IMR-90 (cell line): ENCODE measurements at regions of chr10 and their contacts with region 1.

Region 1: GRCh38 chr10:18312374-18313139 is 172.3 kb downstream of the CACNB2 start:
- DNase-seq: peak; percentile 62
- ATAC-seq: peak; percentile 90
- H3K4me3 ChIP-seq: no peak overlapping the region
- H3K27ac ChIP-seq: no peak overlapping the region
- H3K4me1 ChIP-seq: no peaks in the 10 kb centered on the region
- H3K27me3 ChIP-seq: no peaks in the 10 kb centered on the region; the same call in 1 of the 2 replicates
- CTCF ChIP-seq: peak; percentile 51
- POLR2A ChIP-seq: no peak
- RAD21 ChIP-seq: peak; percentile 60

Region 2: GRCh38 chr10:18238870-18239485 is 73.6 kb before region 1 on chr10:
- CTCF ChIA-PET with region 1: no interaction called
- POLR2A ChIA-PET with region 1: no interaction called
- dilution Hi-C with region 1: no loop called
- in situ Hi-C with region 1: no loop called
- intact Hi-C with region 1: loop called (anchors 2 kb)
- DNase-seq: peak; percentile 70
- ATAC-seq: peak; percentile 84
- H3K4me3 ChIP-seq: no peak overlapping the region
- H3K27ac ChIP-seq: no peak overlapping the region
- H3K4me1 ChIP-seq: peaks cover 2% of the 10 kb centered on the region; the same call in 1 of the 2 replicates
- H3K27me3 ChIP-seq: peaks cover 2% of the 10 kb centered on the region; the same call in 1 of the 2 replicates
- CTCF ChIP-seq: peak; percentile 77
- POLR2A ChIP-seq: no peak
- RAD21 ChIP-seq: peak; percentile 84

Region 3: DNA sequence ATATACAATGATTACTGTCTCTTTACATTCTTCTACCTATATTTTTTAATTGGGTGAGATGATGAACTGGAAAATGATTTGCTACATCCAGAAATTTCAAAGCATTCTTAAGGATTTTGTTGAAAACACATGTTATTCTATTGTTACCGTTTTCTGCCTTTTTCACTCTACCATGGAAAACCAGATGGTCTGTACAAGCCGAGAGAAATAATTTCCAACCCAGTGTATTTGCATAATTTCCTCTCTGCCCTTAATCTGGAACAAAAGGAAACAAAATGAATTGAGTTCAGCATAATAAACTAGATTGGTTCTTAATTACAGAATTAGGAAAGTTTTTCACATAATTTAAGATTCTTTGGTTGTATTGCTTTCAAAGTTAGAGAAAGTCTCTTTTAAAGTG is 38.9 kb after region 1 on chr10:
- CTCF ChIA-PET with region 1: no interaction called
- POLR2A ChIA-PET with region 1: interaction called, 10 read pairs
- dilution Hi-C with region 1: no loop called
- in situ Hi-C with region 1: no loop called
- intact Hi-C with region 1: no loop called
- DNase-seq: no peak
- ATAC-seq: no peak
- H3K4me3 ChIP-seq: no peak overlapping the region
- H3K27ac ChIP-seq: no peak overlapping the region
- H3K4me1 ChIP-seq: no peaks in the 10 kb centered on the region
- H3K27me3 ChIP-seq: no peaks in the 10 kb centered on the region
- CTCF ChIP-seq: no peak
- POLR2A ChIP-seq: no peak
- RAD21 ChIP-seq: no peak